ENCODE measurements at regions of chr14 and their contacts with region 1.

Region 1: DNA sequence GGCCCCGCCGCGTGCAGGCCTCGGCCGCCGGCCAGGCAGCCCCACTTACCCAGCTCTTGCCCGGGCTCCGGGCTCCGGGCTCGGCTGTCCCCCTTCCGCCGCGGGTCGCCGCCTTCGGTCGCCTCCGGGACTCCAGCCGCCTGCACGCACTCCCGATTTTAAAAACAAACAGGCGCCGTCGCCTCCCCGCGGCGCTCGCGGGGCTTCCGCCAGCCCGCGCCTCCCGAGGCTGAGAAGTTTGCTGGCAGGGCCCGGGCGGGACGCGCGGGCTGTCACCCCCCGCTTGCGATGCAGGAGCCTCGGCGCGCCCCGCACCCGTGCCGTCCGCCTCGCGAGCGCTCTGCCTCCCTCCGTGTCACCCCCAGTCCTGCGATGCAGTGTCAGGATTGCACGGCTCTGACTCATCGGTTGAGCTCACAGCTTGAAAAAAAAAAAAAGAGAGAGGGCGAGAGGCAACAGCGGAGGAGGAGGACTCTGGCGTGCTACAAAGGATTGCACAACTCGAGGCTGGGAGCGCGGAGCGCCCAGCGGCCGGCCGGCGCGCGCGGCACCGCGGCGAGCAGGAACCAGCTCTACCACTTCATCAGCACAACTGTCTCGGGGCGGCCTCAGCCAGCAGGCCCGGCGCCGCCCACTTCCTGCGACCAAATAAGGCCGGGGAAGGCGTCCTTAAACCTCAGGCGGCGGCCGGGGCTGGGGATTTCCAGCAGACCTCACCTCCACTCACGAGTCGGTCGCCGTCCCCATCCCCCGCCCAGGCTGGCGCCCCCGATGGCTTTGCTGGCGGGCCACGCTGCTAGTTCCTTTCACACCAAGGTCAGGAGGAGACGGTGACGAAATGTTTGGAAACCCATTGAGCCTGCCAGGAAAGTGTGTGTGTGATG is 45.8 kb upstream of the PNMA1 start:
- DNase-seq: peak; percentile 96 to 98
- ATAC-seq: peak; percentile 74 to 92 (median 83)
- H3K4me3 ChIP-seq: peak overlapping the region; percentile 38
- H3K4me3 Mint-ChIP-seq: peak overlapping the region; percentile 89
- H3K27ac ChIP-seq: peak overlapping the region; percentile 88
- H3K27ac Mint-ChIP-seq: peak overlapping the region; percentile 96 to 98
- H3K4me1 ChIP-seq: peaks cover 81% of the 10 kb centered on the region
- H3K4me1 Mint-ChIP-seq: peaks cover 69 to 89% of the 10 kb centered on the region in 2 donors
- H3K27me3 ChIP-seq: no peaks in the 10 kb centered on the region
- H3K27me3 Mint-ChIP-seq: no peaks in the 10 kb centered on the region
- CTCF ChIP-seq: no peak

Region 2: GRCh38 chr14:73576391-73576790 is 183.6 kb before region 1 on chr14:
- intact Hi-C with region 1: no loop called
- DNase-seq: no peak
- ATAC-seq: no peak
- H3K4me3 ChIP-seq: no peak overlapping the region
- H3K4me3 Mint-ChIP-seq: no peak overlapping the region
- H3K27ac ChIP-seq: no peak overlapping the region
- H3K27ac Mint-ChIP-seq: no peak overlapping the region
- H3K4me1 ChIP-seq: no peaks in the 10 kb centered on the region
- H3K4me1 Mint-ChIP-seq: peaks cover 8 to 9% of the 10 kb centered on the region in 2 donors
- H3K27me3 ChIP-seq: no peaks in the 10 kb centered on the region
- H3K27me3 Mint-ChIP-seq: no peaks in the 10 kb centered on the region
- CTCF ChIP-seq: no peak

Region 3: DNA sequence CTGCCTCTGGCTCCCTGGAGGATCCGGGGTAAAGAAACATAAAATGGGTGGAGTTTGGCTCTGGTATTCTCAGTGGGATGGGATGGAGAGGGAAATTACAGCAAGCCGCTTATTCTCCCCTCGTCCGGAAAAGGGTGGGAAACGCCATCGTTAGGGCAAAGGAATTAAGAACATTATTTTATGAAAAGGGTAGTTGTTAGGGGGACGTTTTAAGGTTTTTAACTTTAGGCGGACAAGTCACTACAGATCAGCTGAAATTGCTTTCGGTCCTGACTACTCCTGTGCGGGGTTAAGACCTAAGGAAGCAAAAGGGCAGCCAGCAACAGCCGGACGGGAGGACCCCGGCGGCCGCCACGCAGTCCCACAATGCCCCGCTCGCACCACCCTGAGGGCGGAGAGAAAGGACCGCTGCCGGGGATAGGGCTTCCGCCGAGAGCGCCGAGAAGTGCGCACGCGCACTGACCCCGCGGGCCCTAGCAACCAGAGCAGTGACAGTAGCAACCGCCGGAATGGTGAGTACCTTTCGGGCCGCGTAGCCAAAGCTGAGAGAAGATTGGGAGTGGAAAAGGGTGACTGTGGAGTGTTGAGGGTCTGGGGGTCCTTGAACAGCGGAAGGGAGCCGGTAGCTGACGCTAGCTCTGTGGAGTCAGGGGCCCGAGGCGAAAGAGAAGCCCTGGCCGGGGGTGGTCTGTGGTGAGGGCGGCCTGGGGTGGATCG is 115.3 kb before region 1 on chr14 and contains the start of gene DNAL1:
- intact Hi-C with region 1: loop called (anchors 5 kb)
- DNase-seq: peak; percentile 91 to 96
- ATAC-seq: peak; percentile 95 to 99 (median 95)
- H3K4me3 ChIP-seq: peak within 1 kb of the TSS; percentile 63
- H3K4me3 Mint-ChIP-seq: peak within 1 kb of the TSS; percentile 96
- H3K27ac ChIP-seq: peak within 1 kb of the TSS; percentile 80
- H3K27ac Mint-ChIP-seq: peak within 1 kb of the TSS; percentile 93 to 94
- H3K4me1 ChIP-seq: peaks cover 21% of the 10 kb centered on the region
- H3K4me1 Mint-ChIP-seq: peaks cover 21% of the 10 kb centered on the region in 2 donors
- H3K27me3 ChIP-seq: no peaks in the 10 kb centered on the region
- H3K27me3 Mint-ChIP-seq: no peaks in the 10 kb centered on the region
- CTCF ChIP-seq: no peak
- total RNA-seq, gene DNAL1: 6.7 to 10.3 (median 10.1) TPM

Region 4: GRCh38 chr14:73741386-73741875 is 18.5 kb before region 1 on chr14:
- intact Hi-C with region 1: loop called (anchors 2 kb)
- DNase-seq: peak in 1 of 2 donors; percentile 83
- ATAC-seq: peak; percentile 65 to 79 (median 78)
- H3K4me3 ChIP-seq: peak overlapping the region; percentile 26
- H3K4me3 Mint-ChIP-seq: peak overlapping the region; percentile 80
- H3K27ac ChIP-seq: peak overlapping the region; percentile 84
- H3K27ac Mint-ChIP-seq: peak overlapping the region; percentile 88 to 96
- H3K4me1 ChIP-seq: peaks cover 82% of the 10 kb centered on the region
- H3K4me1 Mint-ChIP-seq: peaks cover 59 to 66% of the 10 kb centered on the region in 2 donors
- H3K27me3 ChIP-seq: no peaks in the 10 kb centered on the region
- H3K27me3 Mint-ChIP-seq: no peaks in the 10 kb centered on the region
- CTCF ChIP-seq: no peak

Region 5: DNA sequence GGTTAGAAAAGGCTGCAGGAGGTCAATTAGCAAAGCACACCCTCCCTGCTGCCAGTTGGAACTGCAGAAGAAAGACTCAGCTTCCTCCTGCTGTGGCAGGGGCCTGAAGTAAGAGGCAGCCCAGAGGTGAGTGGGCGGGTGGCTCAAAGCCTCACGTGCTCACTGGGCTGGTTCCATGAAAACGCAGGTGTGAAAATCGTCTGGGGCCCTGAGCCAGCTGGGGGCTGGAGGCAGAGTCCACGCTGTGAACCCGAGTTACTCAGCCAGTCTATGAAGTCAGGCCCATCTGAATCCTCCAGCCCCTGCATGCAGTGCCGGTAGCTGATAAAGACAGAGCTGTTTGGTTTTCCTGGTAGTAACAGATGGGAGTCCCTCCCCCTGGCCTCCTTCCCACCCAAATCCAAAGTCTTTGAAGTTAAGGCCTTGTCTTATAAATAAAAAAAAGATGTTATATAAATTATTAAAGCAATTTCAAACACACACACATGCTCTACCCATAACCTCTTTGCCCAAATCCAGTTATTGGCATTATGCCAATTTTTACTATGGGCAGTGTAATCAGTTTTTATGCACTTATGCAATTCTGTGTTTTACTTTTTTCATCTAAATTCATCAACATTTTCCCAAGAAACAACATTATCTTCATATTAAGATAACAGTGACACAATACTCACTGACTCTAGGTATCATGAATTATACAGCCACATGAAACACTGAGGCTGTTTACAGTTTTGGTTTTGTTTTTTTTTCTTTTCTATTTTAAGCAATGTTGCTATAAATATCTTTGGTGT is 12.1 kb after region 1 on chr14:
- intact Hi-C with region 1: loop called (anchors 1 kb)
- DNase-seq: peak in 1 of 2 donors; percentile 81
- ATAC-seq: peak; percentile 81 to 83 (median 82)
- H3K4me3 ChIP-seq: no peak overlapping the region
- H3K4me3 Mint-ChIP-seq: peak overlapping the region; percentile 66
- H3K27ac ChIP-seq: peak overlapping the region; percentile 76
- H3K27ac Mint-ChIP-seq: peak overlapping the region; percentile 83 to 89
- H3K4me1 ChIP-seq: peaks cover 62% of the 10 kb centered on the region
- H3K4me1 Mint-ChIP-seq: peaks cover 47 to 54% of the 10 kb centered on the region in 2 donors
- H3K27me3 ChIP-seq: no peaks in the 10 kb centered on the region
- H3K27me3 Mint-ChIP-seq: no peaks in the 10 kb centered on the region
- CTCF ChIP-seq: no peak

Region 6: DNA sequence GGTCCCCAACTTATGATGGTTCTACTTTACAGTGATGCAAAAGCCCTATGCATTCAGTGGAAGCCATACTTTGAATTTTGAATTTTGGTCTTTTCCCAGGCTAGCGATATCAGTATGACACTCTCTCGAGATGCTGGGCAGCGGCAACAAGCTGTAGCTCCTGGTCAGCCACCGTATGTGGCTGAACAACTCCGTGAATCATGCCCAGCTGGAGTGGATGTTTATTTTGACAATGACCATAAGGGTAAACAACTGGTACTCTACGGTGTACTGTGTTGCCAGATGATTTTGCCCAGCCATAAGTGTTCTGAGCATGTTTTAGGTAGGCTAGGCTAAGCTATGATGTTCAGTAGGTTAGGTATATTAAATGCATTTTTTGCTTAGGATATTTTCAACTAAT is 118.5 kb after region 1 on chr14:
- intact Hi-C with region 1: no loop called
- DNase-seq: no peak
- ATAC-seq: no peak
- H3K4me3 ChIP-seq: no peak overlapping the region
- H3K4me3 Mint-ChIP-seq: no peak overlapping the region
- H3K27ac ChIP-seq: no peak overlapping the region
- H3K27ac Mint-ChIP-seq: no peak overlapping the region
- H3K4me1 ChIP-seq: no peaks in the 10 kb centered on the region
- H3K4me1 Mint-ChIP-seq: no peaks in the 10 kb centered on the region
- H3K27me3 ChIP-seq: no peaks in the 10 kb centered on the region
- H3K27me3 Mint-ChIP-seq: no peaks in the 10 kb centered on the region
- CTCF ChIP-seq: no peak